ENCODE measurements at regions of chr7 and their contacts with region 1.

Region 1: GRCh38 chr7:40232242-40232893 is 97.6 kb downstream of the SUGCT start:
- DNase-seq: no peak
- ATAC-seq: no peak
- H3K4me3 ChIP-seq: no peak overlapping the region
- H3K27ac ChIP-seq: no peak overlapping the region
- H3K4me1 ChIP-seq: peaks cover 0 to 4% (median 0%) of the 10 kb centered on the region in 12 donors
- H3K27me3 ChIP-seq: no peaks in the 10 kb centered on the region
- CTCF ChIP-seq: peak; percentile 8 to 65 (median 46)
- POLR2A ChIP-seq: no peak

Region 2: GRCh38 chr7:40604601-40605438 is 372.5 kb after region 1 on chr7:
- intact Hi-C with region 1: loop called in 4 of 10 experiments (anchors 10 kb)
- DNase-seq: peak; percentile 19 to 75 (median 54)
- ATAC-seq: peak; percentile 58 to 88 (median 86)
- H3K4me3 ChIP-seq: no peak overlapping the region
- H3K27ac ChIP-seq: no peak overlapping the region
- H3K4me1 ChIP-seq: peaks cover 0 to 6% (median 0%) of the 10 kb centered on the region in 12 donors
- H3K27me3 ChIP-seq: no peaks in the 10 kb centered on the region
- CTCF ChIP-seq: peak; percentile 40 to 71 (median 57)
- POLR2A ChIP-seq: no peak

Region 3: DNA sequence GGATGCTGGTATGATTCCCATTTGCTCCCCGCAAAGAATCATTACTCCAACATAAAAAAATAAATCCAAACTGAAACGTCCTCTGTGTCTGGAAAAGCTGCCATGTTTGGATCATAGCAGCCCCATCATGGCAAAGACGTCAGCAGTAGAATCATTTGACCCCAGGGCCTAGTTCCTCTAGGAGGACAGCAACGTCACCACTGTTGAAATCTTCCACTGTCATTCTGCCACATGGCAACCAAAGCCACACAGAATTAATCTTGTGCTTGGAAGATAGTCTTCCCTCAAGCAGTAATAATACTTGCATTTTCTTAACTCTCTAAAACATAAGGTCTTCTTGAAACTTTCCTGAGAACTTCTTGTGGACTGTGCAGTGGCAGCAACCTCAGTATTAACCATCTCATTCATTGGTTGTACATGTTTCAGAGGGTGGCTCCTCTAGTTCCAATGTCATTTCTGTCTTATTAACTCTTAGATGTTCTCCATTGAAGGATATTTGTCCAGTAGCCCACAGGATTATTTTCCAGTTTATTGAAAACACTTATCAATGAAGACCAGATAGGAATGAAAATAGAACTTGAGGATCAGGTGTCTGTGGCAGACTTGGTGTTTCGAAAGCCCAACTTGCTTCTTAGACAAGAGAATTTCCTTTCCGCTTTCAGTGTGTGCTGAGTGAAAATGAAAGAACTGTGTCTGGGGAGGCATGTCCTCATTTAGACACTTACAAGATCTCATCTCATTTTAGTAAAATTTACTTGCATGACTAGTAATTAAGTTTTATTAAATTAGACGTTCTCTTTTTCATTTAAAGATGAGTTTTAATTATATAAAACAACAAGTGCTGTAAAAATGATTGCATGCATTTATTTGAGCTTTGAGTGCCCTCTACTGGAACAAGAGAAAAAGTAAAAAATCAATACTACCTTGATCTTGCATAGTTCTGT is 1499.4 kb after region 1 on chr7:
- intact Hi-C with region 1: loop called in 2 of 10 experiments (anchors 5 to 10 kb)
- DNase-seq: no peak
- ATAC-seq: no peak
- H3K4me3 ChIP-seq: no peak overlapping the region
- H3K27ac ChIP-seq: no peak overlapping the region
- H3K4me1 ChIP-seq: peaks cover 0 to 9% (median 0%) of the 10 kb centered on the region in 12 donors
- H3K27me3 ChIP-seq: no peaks in the 10 kb centered on the region
- CTCF ChIP-seq: peak in 11 of 12 donors; percentile 10 to 57 (median 37)
- POLR2A ChIP-seq: no peak